ENCODE measurements at regions of chr2 and their contacts with region 1.

Region 1: DNA sequence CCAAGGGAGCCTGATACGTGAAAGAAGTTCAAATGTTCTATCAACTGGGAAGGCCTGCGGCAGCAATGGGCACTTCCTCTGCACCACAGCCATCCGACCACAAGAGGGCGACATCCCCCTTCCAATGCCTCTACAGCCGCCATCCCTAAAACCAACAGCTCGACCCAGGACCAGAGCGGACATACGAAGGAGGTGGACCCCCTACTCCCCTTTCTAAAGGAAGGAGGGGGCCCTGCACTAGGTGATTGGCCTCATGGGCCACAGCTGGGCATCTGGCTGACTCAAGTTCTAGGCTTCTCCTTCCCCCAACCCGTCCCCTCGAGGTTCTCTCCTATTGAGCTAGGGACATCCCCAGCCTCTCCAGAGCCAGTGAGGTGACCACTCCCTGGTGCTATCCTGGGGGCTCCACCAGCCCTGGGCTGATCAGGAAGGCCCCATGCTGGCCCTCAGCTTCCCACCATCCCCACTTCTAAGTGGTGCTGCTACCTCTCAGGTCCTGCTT is 217.2 kb downstream of the TNS1 start:
- DNase-seq: peak; percentile 76
- H3K4me3 ChIP-seq: no peak overlapping the region
- H3K27ac ChIP-seq: no peak overlapping the region
- H3K4me1 ChIP-seq: no peaks in the 10 kb centered on the region
- H3K27me3 ChIP-seq: no peaks in the 10 kb centered on the region
- CTCF ChIP-seq: peak; percentile 91 to 95 (median 94)
- POLR2A ChIP-seq: no peak

Region 2: GRCh38 chr2:217988014-217988839 is 202.6 kb after region 1 on chr2:
- intact Hi-C with region 1: loop called (anchors 1 kb)
- DNase-seq: peak; percentile 96
- H3K4me3 ChIP-seq: no peak overlapping the region
- H3K27ac ChIP-seq: peak overlapping the region; percentile 80 to 83
- H3K4me1 ChIP-seq: peaks cover 7% of the 10 kb centered on the region
- H3K27me3 ChIP-seq: no peaks in the 10 kb centered on the region
- CTCF ChIP-seq: peak; percentile 80 to 94 (median 90)
- POLR2A ChIP-seq: no peak